Left cardiac atrium (tissue), 4 donors: ENCODE measurements at regions of chr7 and their contacts with region 1.

Region 1: GRCh38 chr7:79308192-79308591 is 145.3 kb downstream of the MAGI2 start:
- DNase-seq: no peak
- ATAC-seq: peak; percentile 78 to 88

Region 2: GRCh38 chr7:79090543-79090942 is 217.6 kb before region 1 on chr7:
- intact Hi-C with region 1: no loop called
- DNase-seq: no peak
- ATAC-seq: no peak

Region 3: DNA sequence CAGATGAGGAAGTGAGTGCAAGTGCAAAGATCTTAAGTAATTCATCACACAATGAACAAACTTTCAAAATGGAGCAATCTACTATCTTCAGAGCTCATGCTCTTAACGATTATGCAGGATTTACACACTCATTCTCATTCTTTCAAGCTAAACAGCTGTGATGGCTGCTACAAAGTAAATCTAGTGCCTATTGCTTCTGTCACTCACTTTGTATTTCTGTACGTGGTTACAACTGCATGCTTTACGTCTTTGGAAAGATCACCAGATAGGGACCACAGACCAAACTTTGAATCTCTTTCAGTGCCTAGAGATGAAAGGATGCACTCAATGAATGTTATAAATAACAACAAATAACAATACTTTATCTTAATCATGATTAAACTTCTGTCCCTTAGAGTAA is 49.4 kb before region 1 on chr7:
- intact Hi-C with region 1: no loop called
- DNase-seq: no peak
- ATAC-seq: no peak

Region 4: DNA sequence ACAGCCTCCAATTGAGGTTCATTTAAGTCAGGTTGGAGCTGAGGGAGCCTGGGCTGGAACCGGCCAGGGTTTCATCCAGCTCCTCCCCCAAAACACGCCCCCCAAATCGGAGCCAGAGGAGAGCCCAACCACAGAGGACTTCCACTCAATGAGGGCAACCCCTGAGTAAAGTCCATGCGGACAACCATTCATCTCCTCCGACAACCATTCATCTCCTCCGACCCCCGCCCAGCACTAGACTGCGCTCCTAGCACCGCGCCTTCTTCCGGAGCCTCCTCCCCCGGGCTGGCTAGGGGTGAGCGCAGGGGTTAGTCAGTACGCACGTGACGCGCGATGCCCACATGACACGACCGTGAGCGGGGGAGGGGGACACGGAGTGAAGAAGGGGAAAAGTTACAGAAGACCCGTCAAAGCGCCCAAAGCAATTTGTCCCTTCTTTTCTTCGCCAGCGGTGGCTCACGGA is 143.9 kb after region 1 on chr7:
- intact Hi-C with region 1: loop called in 1 of 2 experiments (anchors 10 kb)
- DNase-seq: peak; percentile 87
- ATAC-seq: peak; percentile 78 to 85

Region 5: GRCh38 chr7:79478386-79478785 is 170.2 kb after region 1 on chr7:
- intact Hi-C with region 1: no loop called
- DNase-seq: no peak
- ATAC-seq: no peak

Region 6: GRCh38 chr7:80018941-80019752 is 711.0 kb after region 1 on chr7:
- intact Hi-C with region 1: loop called in 1 of 2 experiments (anchors 10 kb)
- DNase-seq: peak; percentile 27
- ATAC-seq: peak; percentile 53 to 65